ENCODE measurements at regions of chr3 and their contacts with region 1.

Region 1: DNA sequence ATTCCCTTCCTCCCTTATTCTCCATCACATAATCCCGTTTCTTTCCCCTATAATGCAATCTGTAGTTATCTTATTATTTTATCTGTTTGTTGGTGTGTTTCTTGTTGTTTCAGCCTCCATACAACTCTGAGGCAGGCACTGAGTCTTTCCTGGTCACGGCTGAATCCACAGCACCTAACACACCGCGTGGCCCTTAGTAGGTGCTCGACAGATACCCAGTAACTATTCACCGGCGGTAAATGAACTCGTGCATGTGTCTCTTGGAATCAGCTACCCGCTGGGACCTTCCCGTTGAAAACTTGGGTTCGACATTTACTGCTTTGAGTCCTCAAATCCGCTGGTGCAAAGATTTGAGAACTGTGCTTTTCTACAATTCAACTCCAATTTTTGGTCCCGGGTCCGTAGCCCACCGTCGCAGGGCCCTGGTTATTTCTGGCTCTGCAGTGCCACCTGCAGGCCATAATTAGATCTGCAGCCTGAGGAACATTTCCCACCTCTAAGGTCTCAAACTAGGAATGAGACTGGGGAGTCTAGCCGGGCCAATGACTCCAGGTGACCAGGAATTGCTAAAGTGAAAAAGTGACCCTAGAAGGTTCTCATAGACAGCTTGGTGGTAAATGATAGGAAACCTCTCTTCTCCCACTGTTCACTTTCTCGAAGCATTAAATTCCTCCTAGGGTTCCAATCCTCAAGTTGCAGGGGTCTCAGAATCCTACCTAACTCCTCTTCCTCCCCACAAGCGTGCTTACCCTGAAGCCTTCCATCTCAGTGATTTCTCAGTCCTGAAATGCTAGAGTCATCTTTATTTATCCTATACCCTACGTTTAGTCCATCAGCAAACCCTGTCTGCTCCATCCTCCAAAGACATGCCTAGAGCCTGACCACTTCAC is 40.0 kb upstream of the TRH start:
- DNase-seq: peak; percentile 41
- H3K4me3 ChIP-seq: no peak overlapping the region
- H3K27ac ChIP-seq: no peak overlapping the region
- H3K4me1 ChIP-seq: no peaks in the 10 kb centered on the region
- CTCF ChIP-seq: peak; percentile 99

Region 2: GRCh38 chr3:129627429-129628168 is 306.9 kb before region 1 on chr3:
- CTCF ChIA-PET with region 1: no interaction called
- POLR2A ChIA-PET with region 1: no interaction called
- intact Hi-C with region 1: loop called (anchors 1 kb)
- DNase-seq: peak; percentile 69
- H3K4me3 ChIP-seq: no peak overlapping the region
- H3K27ac ChIP-seq: no peak overlapping the region
- H3K4me1 ChIP-seq: peaks cover 13% of the 10 kb centered on the region
- CTCF ChIP-seq: peak; percentile 88

Region 3: DNA sequence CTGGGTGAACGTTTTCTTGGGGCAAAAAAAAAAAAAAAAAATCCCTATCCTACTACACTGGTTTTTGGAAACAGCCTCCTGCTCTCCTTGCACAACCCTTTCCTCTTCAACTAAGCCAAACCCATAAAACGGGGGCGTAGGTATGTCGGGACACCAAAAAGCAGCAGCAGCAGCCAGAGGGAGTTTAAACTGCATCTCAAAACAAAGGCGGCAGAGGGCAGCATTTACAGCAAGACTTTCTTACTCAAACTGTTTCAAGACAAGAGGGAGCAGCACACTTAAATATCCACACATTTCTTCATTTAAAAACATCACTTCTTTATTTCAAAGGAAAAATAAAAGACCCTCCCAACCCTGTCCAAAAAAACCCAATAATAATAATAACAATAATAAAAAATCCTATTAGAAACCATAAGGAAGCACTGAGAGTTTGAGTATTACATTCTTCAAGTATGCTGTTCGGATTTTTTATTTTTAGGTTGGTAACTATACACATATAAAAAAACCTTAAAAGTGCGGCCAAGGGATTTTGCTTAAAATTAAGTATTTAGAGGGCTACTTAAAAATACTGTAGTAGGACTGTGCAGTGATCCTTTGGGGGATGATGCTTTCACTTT is 284.1 kb before region 1 on chr3:
- CTCF ChIA-PET with region 1: no interaction called
- POLR2A ChIA-PET with region 1: no interaction called
- intact Hi-C with region 1: loop called (anchors 1 kb)
- DNase-seq: peak; percentile 70
- H3K4me3 ChIP-seq: no peak overlapping the region
- H3K27ac ChIP-seq: no peak overlapping the region
- H3K4me1 ChIP-seq: no peaks in the 10 kb centered on the region
- CTCF ChIP-seq: peak; percentile 90

Region 4: GRCh38 chr3:129911261-129911861 is 23.1 kb before region 1 on chr3:
- CTCF ChIA-PET with region 1: no interaction called
- POLR2A ChIA-PET with region 1: no interaction called
- intact Hi-C with region 1: no loop called
- DNase-seq: no peak
- H3K4me3 ChIP-seq: no peak overlapping the region
- H3K27ac ChIP-seq: no peak overlapping the region
- H3K4me1 ChIP-seq: no peaks in the 10 kb centered on the region
- CTCF ChIP-seq: no peak